Right ventricle myocardium inferior (tissue), 1 donor: ENCODE measurements at regions of chr5 and their contacts with region 1.

Region 1: GRCh38 chr5:135426102-135427082 is 20.8 kb downstream of the DCANP1 start:
- DNase-seq: no peak
- ATAC-seq: peak; percentile 33

Region 2: DNA sequence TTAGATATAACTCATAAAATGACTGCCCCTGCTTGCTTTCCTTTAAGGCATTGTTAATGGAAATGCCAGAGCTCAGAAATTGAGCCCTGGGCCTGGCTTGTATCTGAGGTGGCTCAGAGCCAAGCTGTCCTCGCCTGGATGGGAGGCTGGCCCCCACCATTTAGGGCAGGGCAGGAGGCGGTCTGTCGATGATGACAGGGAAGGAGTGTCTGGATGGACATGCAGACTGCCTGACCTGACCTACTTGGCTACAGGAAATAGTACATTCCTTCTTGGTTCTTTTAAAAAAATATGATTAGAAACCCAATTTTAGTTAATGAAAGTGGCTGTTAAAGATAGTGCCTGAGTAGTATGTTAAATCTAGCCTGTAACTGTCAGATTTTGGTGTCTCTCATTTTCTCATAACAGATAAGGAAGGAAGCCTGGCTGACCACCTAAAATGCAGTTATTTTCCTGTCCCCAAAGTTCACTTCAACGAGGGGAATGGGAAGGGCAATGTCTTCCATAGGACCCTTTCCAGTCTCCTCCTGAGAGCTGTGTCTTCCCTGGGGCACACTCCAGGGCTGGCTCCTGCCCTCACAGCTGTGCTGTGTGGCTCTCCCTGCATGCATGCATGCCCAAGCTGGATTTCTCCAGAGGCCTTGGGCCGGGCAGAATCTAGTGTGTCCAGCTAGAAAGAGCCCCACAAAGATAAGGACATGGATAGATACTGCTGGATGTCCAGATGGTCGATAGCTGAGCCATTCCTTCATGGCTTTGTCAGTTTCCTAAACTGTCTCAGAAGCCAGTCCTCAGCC is 69.7 kb before region 1 on chr5:
- intact Hi-C with region 1: loop called (anchors 5 kb)
- DNase-seq: peak; percentile 88
- ATAC-seq: peak; percentile 94

Region 3: GRCh38 chr5:135376961-135377624 is 49.3 kb before region 1 on chr5:
- intact Hi-C with region 1: no loop called
- DNase-seq: no peak
- ATAC-seq: no peak

Region 4: DNA sequence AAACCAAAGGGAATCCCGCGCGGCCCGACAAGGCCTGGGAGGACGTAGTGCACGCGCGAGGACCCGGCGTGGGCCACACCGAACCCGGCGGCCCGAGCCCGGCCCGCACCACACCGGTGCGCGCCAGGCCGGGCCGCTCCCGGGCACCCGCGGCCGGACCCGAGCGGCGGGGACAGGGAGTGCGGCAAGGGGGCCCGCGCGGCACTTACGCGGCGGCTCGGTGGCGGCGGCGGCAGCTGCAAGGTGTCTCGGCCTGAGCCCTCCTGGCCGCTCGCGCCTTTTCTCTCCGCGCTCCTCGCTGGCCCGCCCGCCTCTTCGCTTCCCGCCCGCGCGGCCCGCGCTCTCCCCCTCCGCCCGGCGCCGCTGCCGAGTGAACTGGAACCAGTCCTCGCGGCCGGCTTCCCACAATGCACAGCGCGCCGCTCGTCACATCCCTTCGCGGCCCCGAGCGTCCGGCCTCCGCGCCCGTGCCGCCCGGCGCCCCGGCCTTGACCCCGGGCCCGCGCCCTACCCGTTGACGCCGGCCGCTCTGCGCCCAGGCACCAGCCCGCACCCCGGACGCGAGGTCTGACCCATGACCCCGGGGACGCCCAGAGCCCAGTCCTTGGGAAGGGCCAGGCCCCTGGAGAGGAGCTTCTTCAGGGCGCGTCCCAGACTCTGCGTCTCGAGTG is 27.4 kb before region 1 on chr5 and contains the start of gene MACROH2A1:
- intact Hi-C with region 1: loop called (anchors 2 kb)
- DNase-seq: peak; percentile 97
- ATAC-seq: peak; percentile 96
- total RNA-seq, gene MACROH2A1: 104 TPM

Region 5: GRCh38 chr5:136020383-136021015 is 594.1 kb after region 1 on chr5:
- intact Hi-C with region 1: no loop called
- DNase-seq: no peak
- ATAC-seq: no peak